Activated T-helper 1 cell treated with anti-CD3 and anti-CD28 coated beads, Interleukin-12 subunit alpha, Interleukin-12 subunit beta, Interleukin-2, Interleukin-4 antibody, amounts not matched to agents 30 ng/mL and 10 ng/mL and 1 ng/mL, durations not matched to agents 14 hours and 24 hours and 36 hours (primary cell): ENCODE measurements at regions of chr5 and their contacts with region 1.

Region 1: DNA sequence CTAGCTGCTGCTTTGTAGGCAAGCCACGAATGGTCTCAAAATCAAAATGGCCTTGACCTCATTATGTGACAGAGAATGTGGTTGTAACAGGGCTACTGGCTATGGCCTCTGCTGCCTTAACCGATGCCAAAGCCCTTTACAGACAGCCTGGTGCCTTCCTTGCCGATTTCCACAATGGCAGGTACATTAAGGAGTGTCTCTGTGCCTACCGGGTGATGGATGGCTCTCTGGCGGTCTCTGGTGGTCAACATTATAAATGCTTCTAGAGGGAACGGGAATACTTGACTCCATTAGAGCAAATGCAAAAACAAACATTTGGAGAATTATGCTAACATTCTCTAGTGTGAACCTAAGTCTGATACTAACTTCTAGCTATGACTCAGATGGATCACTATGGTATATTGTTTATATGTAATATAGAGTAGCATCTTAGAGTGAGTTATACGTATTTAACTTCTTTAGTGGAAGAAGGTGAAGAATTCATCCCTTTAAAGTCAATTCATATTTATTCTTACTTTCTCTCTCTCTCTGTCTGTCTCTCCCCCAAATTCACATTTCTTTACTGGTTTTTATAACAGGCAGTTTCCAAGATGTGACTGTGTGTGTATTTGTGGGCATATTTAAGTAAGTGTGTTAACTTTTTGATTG is 52.5 kb downstream of the RPS23 start:
- DNase-seq: peak; percentile 55
- H3K4me3 Mint-ChIP-seq: no peak overlapping the region
- H3K27ac Mint-ChIP-seq: no peak overlapping the region
- H3K4me1 Mint-ChIP-seq: no peaks in the 10 kb centered on the region
- H3K27me3 Mint-ChIP-seq: no peaks in the 10 kb centered on the region

Region 2: GRCh38 chr5:81506900-81507588 is 718.6 kb before region 1 on chr5:
- intact Hi-C with region 1: loop called (anchors 1 kb)
- DNase-seq: peak; percentile 11
- H3K4me3 Mint-ChIP-seq: no peak overlapping the region
- H3K27ac Mint-ChIP-seq: no peak overlapping the region
- H3K4me1 Mint-ChIP-seq: no peaks in the 10 kb centered on the region
- H3K27me3 Mint-ChIP-seq: no peaks in the 10 kb centered on the region

Region 3: DNA sequence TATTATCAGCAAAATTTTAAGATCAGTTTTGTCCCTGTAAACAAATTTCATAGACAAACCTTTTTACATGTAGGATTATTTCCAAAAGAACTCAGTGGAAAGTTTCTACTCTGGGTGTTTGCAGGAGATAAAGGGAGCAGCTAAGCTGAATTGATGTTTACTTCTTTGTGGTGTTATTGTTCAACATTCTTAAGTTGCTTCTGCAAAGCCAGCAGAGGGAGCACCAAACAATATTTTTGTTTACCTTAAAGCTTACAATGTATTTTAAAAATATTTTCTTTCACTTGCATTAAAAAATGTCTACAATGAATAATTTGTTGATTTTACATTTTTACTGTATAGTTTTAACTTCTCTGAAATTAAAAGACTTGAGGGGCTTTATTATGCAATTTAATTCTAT is 118.4 kb before region 1 on chr5:
- intact Hi-C with region 1: loop called (anchors 10 kb)
- DNase-seq: no peak
- H3K4me3 Mint-ChIP-seq: no peak overlapping the region
- H3K27ac Mint-ChIP-seq: no peak overlapping the region
- H3K4me1 Mint-ChIP-seq: peaks cover 7% of the 10 kb centered on the region
- H3K27me3 Mint-ChIP-seq: no peaks in the 10 kb centered on the region

Region 4: GRCh38 chr5:82174128-82174918 is 51.3 kb before region 1 on chr5:
- intact Hi-C with region 1: loop called (anchors 1 kb)
- DNase-seq: peak; percentile 27
- H3K4me3 Mint-ChIP-seq: no peak overlapping the region
- H3K27ac Mint-ChIP-seq: peak overlapping the region; percentile 25
- H3K4me1 Mint-ChIP-seq: peaks cover 12% of the 10 kb centered on the region
- H3K27me3 Mint-ChIP-seq: no peaks in the 10 kb centered on the region